ENCODE measurements at regions of chr12 and their contacts with region 1.

Region 1: DNA sequence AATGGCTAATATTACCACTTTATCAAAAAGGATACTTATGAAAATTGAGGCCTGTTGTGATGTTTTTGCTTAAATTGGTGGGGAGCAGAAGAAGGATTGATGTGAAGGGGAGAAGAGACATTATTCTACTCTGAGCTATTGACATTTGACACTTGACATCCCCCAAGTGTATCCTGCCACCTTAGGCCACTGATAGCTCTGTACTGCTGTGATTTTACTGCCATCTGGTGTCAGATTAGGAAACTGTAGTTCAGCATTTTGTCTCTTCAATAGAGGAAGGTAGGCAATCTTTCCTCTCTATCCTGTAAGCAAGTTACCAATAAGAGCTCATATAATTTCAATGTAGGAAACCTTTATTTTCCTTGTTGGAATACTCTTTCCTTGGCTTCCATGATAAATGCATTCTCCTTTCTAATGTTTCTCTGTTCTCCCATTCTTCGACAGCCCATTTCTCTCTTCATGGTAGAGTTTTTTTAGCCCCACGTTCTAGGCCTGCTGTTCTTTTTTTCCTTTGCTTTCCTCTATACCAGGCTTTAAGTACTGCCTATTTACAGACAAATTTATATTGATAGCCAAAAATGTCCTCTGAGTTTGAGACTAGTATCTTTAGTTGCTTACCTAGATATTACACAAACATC is 46.3 kb downstream of the PPHLN1 start:
- DNase-seq: peak; percentile 57
- H3K4me3 ChIP-seq: no peak overlapping the region
- H3K27ac ChIP-seq: no peak overlapping the region
- H3K4me1 ChIP-seq: no peaks in the 10 kb centered on the region
- H3K27me3 ChIP-seq: no peaks in the 10 kb centered on the region
- CTCF ChIP-seq: peak; percentile 53 to 57
- POLR2A ChIP-seq: no peak

Region 2: DNA sequence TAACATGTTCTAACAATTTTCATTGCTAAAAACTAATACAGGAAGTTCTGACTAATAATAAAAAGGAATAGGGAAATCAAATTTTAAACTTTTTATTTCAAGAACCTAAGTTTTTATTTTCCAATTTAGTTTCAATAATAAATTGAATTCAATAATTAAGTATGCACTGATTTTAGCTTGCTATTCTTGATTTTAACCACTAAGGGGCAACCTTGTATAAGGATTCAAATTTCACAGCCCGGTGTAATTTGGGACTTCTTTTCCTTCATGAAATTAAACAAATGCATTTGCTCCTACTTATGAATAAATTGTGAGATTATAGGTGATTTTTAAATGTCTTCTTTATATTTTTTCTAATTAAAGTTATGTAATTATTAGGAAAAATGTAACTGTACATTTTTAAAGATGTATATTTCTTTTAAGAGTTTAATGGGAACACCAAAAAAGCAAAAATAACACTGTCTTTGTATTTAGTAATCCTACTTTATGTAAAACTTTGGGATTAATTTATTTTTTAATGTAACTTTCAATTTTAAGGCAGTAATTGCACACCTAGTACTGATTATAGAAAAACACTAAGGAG is 1425.6 kb before region 1 on chr12:
- CTCF ChIA-PET with region 1: interaction called, 9 read pairs
- POLR2A ChIA-PET with region 1: no interaction called
- dilution Hi-C with region 1: no loop called
- intact Hi-C with region 1: loop called (anchors 1 kb)
- DNase-seq: peak; percentile 55
- H3K4me3 ChIP-seq: no peak overlapping the region
- H3K27ac ChIP-seq: no peak overlapping the region
- H3K4me1 ChIP-seq: no peaks in the 10 kb centered on the region
- H3K27me3 ChIP-seq: no peaks in the 10 kb centered on the region
- CTCF ChIP-seq: peak in 1 of 2 donors; percentile 41
- POLR2A ChIP-seq: no peak

Region 3: GRCh38 chr12:42129595-42130204 is 242.6 kb before region 1 on chr12:
- CTCF ChIA-PET with region 1: interaction called, 21 read pairs
- POLR2A ChIA-PET with region 1: no interaction called
- dilution Hi-C with region 1: no loop called
- intact Hi-C with region 1: loop called (anchors 1 kb)
- DNase-seq: peak; percentile 86
- H3K4me3 ChIP-seq: no peak overlapping the region
- H3K27ac ChIP-seq: no peak overlapping the region
- H3K4me1 ChIP-seq: peaks cover 22% of the 10 kb centered on the region
- H3K27me3 ChIP-seq: no peaks in the 10 kb centered on the region
- CTCF ChIP-seq: peak; percentile 54 to 62
- POLR2A ChIP-seq: no peak

Region 4: GRCh38 chr12:42277396-42278127 is 94.7 kb before region 1 on chr12:
- CTCF ChIA-PET with region 1: no interaction called
- POLR2A ChIA-PET with region 1: no interaction called
- dilution Hi-C with region 1: no loop called
- intact Hi-C with region 1: no loop called
- DNase-seq: no peak
- H3K4me3 ChIP-seq: no peak overlapping the region
- H3K27ac ChIP-seq: no peak overlapping the region
- H3K4me1 ChIP-seq: no peaks in the 10 kb centered on the region
- H3K27me3 ChIP-seq: peaks cover 2 to 5% of the 10 kb centered on the region in 2 experiments
- CTCF ChIP-seq: no peak
- POLR2A ChIP-seq: no peak

Region 5: DNA sequence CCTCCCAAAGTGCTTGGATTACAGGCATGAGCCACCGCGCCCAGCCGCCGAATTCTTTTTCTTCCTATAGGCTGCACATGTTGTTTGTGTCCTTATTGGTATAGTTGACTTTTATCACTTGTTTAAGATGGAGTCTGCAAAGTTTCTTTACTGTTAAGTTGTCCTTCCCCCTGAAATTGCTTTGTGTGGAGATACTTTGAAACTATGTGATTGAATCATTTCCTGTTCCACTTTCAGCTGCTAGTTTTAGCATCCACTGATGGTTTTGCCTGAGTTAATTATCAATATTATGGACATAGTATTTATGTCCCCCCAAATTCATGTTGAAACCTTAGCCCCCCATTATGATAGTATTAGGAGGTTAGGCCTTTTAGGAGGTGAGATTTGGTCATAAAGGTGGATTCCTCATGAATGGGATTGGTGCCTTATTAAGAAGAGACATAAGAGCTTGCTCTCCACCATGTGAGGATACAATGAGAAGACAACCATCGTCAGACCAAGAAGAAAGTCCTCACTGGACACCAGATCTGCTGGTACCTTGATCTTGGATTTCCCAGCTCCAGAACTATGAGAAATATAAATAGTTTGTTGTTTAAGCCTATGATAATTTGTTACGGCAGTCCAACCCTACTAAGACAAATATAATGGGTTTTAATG is 11.4 kb before region 1 on chr12:
- CTCF ChIA-PET with region 1: interaction called, 19 read pairs
- POLR2A ChIA-PET with region 1: no interaction called
- dilution Hi-C with region 1: no loop called
- intact Hi-C with region 1: no loop called
- DNase-seq: peak; percentile 11
- H3K4me3 ChIP-seq: no peak overlapping the region
- H3K27ac ChIP-seq: no peak overlapping the region
- H3K4me1 ChIP-seq: peaks cover 7% of the 10 kb centered on the region
- H3K27me3 ChIP-seq: no peaks in the 10 kb centered on the region
- CTCF ChIP-seq: no peak
- POLR2A ChIP-seq: no peak

Region 6: GRCh38 chr12:42574851-42575266 is 202.6 kb after region 1 on chr12:
- CTCF ChIA-PET with region 1: interaction called, 8 read pairs
- POLR2A ChIA-PET with region 1: no interaction called
- dilution Hi-C with region 1: no loop called
- intact Hi-C with region 1: loop called (anchors 10 kb)
- DNase-seq: peak; percentile 37
- H3K4me3 ChIP-seq: no peak overlapping the region
- H3K27ac ChIP-seq: peak overlapping the region; percentile 35
- H3K4me1 ChIP-seq: peaks cover 59% of the 10 kb centered on the region
- H3K27me3 ChIP-seq: no peaks in the 10 kb centered on the region
- CTCF ChIP-seq: no peak
- POLR2A ChIP-seq: no peak

Region 7: GRCh38 chr12:42617622-42618021 is 245.3 kb after region 1 on chr12:
- CTCF ChIA-PET with region 1: no interaction called
- POLR2A ChIA-PET with region 1: no interaction called
- dilution Hi-C with region 1: no loop called
- intact Hi-C with region 1: no loop called
- DNase-seq: peak; percentile 28
- H3K4me3 ChIP-seq: no peak overlapping the region
- H3K27ac ChIP-seq: no peak overlapping the region
- H3K4me1 ChIP-seq: no peaks in the 10 kb centered on the region
- H3K27me3 ChIP-seq: no peaks in the 10 kb centered on the region
- CTCF ChIP-seq: no peak
- POLR2A ChIP-seq: no peak